Adrenal gland (tissue), 19 donors: ENCODE measurements at regions of chr1 and their contacts with region 1.

Region 1: DNA sequence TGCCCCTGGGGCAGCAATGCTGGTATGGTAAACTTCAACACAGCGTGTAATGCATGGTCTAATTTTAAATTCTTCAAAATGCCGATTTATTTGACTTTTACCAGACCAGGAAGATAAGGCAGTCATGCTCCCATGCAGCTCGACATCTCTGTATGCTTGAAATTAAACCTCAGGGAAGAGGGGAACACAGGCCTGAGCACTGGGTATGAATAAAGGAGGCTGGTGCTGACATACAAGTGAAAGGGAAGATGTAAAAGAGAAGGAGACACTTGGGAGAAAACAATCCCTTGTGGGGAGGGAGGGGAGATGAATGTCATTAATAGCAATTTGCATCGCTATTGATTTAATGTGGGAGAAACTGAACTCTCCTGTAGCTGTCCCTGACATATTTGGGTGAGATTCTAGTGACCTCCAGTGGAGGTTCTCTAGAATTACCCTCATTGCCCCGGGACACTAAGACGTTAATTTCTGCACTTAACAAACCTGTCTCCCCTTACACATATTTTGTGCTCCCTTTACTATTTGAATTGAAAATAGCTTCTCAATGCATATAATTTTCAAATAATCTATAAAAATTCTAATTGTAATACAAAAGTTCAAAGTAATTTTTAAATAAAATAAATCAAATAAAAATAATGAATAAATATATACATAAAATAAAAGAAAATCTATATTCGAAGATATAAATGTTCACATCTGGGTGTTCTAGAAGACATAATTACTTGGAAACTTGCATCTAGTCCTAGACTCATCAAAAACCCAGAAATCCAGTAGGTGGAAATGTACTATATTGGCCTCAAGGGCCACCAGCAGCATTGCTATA is 283.1 kb downstream of the LMX1A start:
- DNase-seq: peak in 2 of 7 donors; percentile 20 to 28
- H3K4me3 ChIP-seq: no peak overlapping the region
- H3K27ac ChIP-seq: no peak overlapping the region
- H3K4me1 ChIP-seq: no peaks in the 10 kb centered on the region
- H3K27me3 ChIP-seq: no peaks in the 10 kb centered on the region
- CTCF ChIP-seq: peak; percentile 49 to 85 (median 77)
- POLR2A ChIP-seq: no peak

Region 2: DNA sequence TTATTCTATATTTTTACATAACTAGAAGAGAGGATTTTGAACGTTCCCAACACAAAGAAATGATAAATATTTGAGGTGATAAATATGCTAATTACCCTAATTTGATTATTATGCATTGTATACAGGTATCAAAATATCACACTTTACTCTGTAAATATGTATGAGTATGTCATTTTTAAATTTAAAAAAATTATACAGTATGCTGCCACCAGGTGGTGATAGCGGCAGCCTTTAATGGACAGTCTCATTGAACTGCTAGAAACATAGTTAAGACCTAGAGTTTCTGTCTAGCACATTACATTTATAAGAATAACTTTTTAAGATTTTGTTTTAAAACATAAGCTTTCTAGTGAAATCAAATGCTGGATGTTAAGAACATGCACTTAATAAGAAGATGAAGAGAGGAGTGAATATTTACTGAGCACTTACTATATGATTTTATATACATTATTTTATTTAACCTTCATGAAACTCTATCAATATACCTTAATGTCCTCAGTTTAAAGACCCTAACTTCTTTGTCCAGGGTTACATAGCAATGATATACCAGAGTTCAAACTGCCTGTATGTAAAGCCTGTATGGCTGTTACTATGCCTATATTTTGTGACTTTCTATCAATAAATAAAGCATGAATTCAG is 1544.6 kb before region 1 on chr1:
- intact Hi-C with region 1: loop called in 1 of 2 experiments (anchors 5 kb)
- DNase-seq: peak in 6 of 7 donors; percentile 16 to 66 (median 42)
- H3K4me3 ChIP-seq: no peak overlapping the region
- H3K27ac ChIP-seq: no peak overlapping the region
- H3K4me1 ChIP-seq: no peaks in the 10 kb centered on the region
- H3K27me3 ChIP-seq: no peaks in the 10 kb centered on the region
- CTCF ChIP-seq: peak; percentile 55 to 70 (median 61)
- POLR2A ChIP-seq: no peak

Region 3: DNA sequence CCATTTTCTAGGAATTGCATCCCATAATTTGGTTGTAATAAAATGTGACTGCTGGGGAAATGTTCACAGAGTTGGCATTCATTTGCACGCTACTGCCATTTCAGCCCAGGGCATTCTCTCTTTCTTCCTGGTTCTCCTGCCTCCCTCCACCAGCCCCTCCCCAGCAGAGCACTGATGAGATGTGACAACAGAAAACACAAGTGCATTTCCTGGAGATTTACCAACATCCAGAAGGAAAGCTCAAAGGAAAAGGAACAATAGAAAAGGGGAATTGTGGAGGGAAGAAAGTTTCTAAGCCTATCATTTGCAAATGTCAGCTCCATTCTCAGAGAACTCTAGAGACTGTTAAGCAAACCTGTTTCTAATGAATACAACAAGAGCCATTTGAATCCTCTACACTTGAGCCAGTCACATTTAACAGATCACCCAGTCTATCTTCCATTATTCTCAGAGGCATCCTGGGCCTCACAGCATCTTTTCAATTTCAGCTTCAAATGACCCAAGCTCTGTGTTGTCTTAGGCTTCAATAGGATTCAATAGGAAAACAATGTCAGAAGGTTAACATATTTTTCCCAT is 910.0 kb before region 1 on chr1:
- intact Hi-C with region 1: loop called in 1 of 2 experiments (anchors 10 kb)
- DNase-seq: no peak
- H3K4me3 ChIP-seq: no peak overlapping the region
- H3K27ac ChIP-seq: no peak overlapping the region
- H3K4me1 ChIP-seq: no peaks in the 10 kb centered on the region
- H3K27me3 ChIP-seq: no peaks in the 10 kb centered on the region
- CTCF ChIP-seq: no peak
- POLR2A ChIP-seq: no peak